Activated T-helper 1 cell treated with anti-CD3 and anti-CD28 coated beads, Interleukin-12 subunit alpha, Interleukin-12 subunit beta, Interleukin-2, Interleukin-4 antibody, amounts not matched to agents 30 ng/mL and 10 ng/mL and 1 ng/mL, durations not matched to agents 14 hours and 24 hours and 36 hours (primary cell): ENCODE measurements at regions of chr14 and their contacts with region 1.

Region 1: DNA sequence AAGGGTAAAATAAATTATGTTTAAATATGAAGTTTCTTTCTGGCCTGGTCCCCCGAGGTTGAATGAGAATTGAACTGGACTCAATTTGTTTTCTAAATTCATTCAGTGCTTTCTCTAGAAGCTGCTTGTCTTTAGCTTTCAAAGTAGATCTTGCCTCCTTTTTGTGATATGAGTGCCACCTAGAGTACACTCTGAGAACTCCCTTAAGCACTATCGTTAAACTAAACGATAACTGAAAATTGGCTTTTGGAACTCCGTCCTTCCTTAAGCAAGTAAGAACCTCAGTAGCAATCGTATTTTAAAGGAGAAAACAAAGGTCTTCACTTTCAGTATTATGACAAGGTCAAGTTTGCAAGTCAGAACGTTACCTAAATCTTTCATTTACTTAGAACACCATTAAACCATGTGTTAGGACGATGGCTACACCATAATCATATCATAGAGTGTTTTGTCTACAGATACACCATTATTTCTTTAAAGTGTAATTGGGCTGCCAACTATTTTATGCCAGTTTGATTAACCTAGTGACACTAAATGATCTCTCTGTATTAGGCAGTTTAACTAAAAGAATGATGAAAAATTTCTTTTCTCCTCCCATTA is 364.8 kb downstream of the SNAPC1 start:
- DNase-seq: no peak
- H3K4me3 Mint-ChIP-seq: no peak overlapping the region
- H3K27ac Mint-ChIP-seq: no peak overlapping the region
- H3K4me1 Mint-ChIP-seq: no peaks in the 10 kb centered on the region
- H3K27me3 Mint-ChIP-seq: peaks cover 44% of the 10 kb centered on the region

Region 2: GRCh38 chr14:61269321-61270083 is 857.5 kb before region 1 on chr14:
- intact Hi-C with region 1: loop called (anchors 1 kb)
- DNase-seq: peak; percentile 62
- H3K4me3 Mint-ChIP-seq: peak overlapping the region; percentile 48
- H3K27ac Mint-ChIP-seq: no peak overlapping the region
- H3K4me1 Mint-ChIP-seq: no peaks in the 10 kb centered on the region
- H3K27me3 Mint-ChIP-seq: peaks cover 61% of the 10 kb centered on the region

Region 3: DNA sequence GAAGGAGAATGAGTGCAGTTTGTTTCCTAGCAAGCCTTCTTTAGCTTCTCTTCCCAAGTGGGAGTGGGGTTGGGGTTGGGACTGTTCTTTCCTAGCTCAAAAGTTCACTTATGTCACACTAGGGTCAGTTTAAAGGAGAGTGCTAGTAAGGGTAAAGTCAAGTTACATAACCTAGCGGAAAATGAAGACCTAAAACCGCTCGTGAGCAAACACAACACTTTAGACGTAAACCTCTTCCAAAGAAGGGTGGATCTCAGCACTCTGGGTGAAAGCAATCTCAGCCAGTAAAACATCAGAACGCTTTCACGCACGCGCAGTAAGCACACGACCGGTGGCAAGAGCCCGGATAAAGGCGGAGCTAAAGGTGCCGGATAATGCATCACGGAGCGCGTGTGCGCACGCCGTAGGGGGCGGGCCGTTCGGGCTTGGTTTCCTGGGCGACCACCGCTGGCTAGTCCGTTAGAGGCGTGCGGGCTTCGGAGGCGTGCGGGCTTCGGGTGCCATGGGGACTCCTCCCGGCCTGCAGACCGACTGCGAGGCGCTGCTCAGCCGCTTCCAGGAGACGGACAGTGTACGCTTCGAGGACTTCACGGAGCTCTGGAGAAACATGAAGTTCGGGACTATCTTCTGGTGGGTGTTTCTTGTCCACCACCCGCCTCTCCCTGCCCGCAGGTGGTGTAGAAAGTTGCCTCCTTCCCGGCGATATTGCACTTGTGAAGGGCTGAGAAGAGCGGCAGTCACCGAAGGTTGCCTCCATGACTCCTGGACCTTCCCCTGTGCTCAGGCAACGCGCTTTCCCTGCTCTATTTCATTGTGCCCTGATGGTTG is 364.8 kb before region 1 on chr14 and contains the start of gene SNAPC1:
- intact Hi-C with region 1: loop called (anchors 10 kb)
- DNase-seq: peak; percentile 97
- H3K4me3 Mint-ChIP-seq: peak within 1 kb of the TSS; percentile 91
- H3K27ac Mint-ChIP-seq: peak within 1 kb of the TSS; percentile 90
- H3K4me1 Mint-ChIP-seq: peaks cover 59% of the 10 kb centered on the region
- H3K27me3 Mint-ChIP-seq: peaks cover 3% of the 10 kb centered on the region
- total RNA-seq, gene SNAPC1: 10.8 and 11.0 TPM in 2 replicates

Region 4: DNA sequence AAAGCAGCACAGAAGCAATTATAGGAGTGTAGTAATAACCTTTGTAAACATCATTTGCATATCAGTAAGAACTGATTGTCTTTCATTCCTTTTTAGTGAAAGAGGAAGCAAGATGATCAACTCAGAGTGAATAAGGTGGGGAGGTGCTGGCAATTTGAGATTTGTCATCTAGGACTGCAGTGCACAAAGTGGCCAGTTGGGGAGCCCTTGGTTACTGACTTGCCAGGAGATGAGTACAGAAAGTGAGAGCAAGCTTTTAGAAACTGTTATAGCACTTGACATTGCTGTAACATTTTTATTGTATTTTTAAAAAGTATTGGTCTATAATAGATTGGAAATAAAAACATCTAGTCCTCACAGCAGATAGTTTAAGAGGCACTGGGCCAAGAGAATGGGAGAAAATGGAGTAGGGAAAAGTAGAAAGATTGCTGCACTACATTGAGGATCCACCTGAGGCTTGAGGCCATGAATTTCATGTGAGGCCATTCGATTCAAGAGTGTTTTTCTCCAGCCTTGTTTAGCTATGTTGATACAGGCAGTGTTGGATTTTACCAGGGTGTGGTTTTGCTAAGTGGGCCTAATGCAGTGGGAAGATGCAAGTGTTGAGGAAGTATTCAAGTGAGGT is 266.6 kb before region 1 on chr14:
- intact Hi-C with region 1: loop called (anchors 1 kb)
- DNase-seq: peak; percentile 35
- H3K4me3 Mint-ChIP-seq: no peak overlapping the region
- H3K27ac Mint-ChIP-seq: no peak overlapping the region
- H3K4me1 Mint-ChIP-seq: peaks cover 10% of the 10 kb centered on the region
- H3K27me3 Mint-ChIP-seq: peaks cover 22% of the 10 kb centered on the region

Region 5: GRCh38 chr14:61923369-61923768 is 203.6 kb before region 1 on chr14:
- intact Hi-C with region 1: loop called (anchors 1 kb)
- DNase-seq: no peak
- H3K4me3 Mint-ChIP-seq: no peak overlapping the region
- H3K27ac Mint-ChIP-seq: no peak overlapping the region
- H3K4me1 Mint-ChIP-seq: no peaks in the 10 kb centered on the region
- H3K27me3 Mint-ChIP-seq: peaks cover 42% of the 10 kb centered on the region

Region 6: DNA sequence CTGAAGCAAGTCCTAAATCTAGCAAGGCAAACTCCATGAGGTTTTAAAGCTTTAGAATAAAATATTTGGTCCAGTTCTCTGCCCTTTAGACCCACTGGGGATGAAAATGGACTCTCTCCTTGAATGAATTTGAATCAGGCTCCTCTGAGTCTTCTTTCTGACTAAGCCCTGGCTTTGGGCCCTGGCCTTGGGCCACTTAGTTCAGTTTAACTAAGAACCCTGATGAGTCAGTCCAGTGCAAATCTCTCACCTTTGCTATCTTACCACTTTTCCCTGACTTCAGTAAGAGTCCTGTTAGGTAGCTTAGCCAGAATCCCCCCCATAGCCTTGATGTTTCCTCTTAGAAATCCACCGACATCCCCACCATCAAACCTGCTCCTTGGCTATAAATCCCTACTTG is 62.7 kb after region 1 on chr14:
- intact Hi-C with region 1: no loop called
- DNase-seq: no peak
- H3K4me3 Mint-ChIP-seq: no peak overlapping the region
- H3K27ac Mint-ChIP-seq: no peak overlapping the region
- H3K4me1 Mint-ChIP-seq: no peaks in the 10 kb centered on the region
- H3K27me3 Mint-ChIP-seq: peaks cover 4% of the 10 kb centered on the region

Region 7: GRCh38 chr14:62956413-62956812 is 829.4 kb after region 1 on chr14:
- intact Hi-C with region 1: no loop called
- DNase-seq: no peak
- H3K4me3 Mint-ChIP-seq: no peak overlapping the region
- H3K27ac Mint-ChIP-seq: no peak overlapping the region
- H3K4me1 Mint-ChIP-seq: no peaks in the 10 kb centered on the region
- H3K27me3 Mint-ChIP-seq: no peaks in the 10 kb centered on the region